ENCODE measurements at regions of chr9 and their contacts with region 1.

Region 1: DNA sequence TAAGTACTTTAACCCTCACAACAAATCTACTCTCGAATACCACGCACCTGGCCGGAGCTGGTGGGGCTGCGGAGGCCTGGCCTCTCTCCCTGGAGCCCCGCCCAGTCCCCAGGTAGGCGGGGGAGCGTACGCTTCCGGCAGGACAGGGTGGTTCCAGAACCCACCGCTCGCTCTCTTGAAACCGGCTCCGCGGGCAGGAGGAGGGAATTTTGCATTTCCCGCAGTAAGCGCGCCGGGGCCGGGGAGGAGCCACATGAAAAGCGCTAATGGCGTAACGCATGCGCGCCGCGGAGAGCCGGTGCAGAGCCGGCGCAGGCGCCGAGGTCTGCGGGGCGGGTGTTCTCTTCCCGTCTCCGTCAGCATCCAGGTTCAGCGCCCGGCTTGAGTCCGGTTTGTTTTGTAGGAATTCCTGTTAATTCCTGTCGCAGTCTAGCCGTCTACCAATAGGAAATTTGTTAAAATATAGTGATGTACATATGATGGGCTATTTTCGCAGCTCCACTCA is 20.8 kb downstream of the CAVIN4 start:
- DNase-seq: peak; percentile 75 to 86
- ATAC-seq: peak; percentile 77 to 89 (median 86)
- H3K4me3 ChIP-seq: peak overlapping the region; percentile 31 to 63 (median 54)
- H3K27ac ChIP-seq: peak overlapping the region in 2 of 10 donors; percentile 7 to 15
- H3K4me1 ChIP-seq: peaks cover 0 to 20% (median 16%) of the 10 kb centered on the region in 9 donors
- H3K27me3 ChIP-seq: peaks cover 0 to 3% (median 0%) of the 10 kb centered on the region in 7 donors
- CTCF ChIP-seq: no peak

Region 2: GRCh38 chr9:99184475-99185347 is 1414.0 kb before region 1 on chr9:
- intact Hi-C with region 1: loop called in 3 of 10 experiments (anchors 10 kb)
- DNase-seq: peak; percentile 81 to 89
- ATAC-seq: peak; percentile 79 to 95 (median 92)
- H3K4me3 ChIP-seq: peak overlapping the region in 8 of 10 donors; percentile 9 to 46 (median 34)
- H3K27ac ChIP-seq: peak overlapping the region in 6 of 10 donors; percentile 0 to 54 (median 43)
- H3K4me1 ChIP-seq: peaks cover 0 to 22% (median 9%) of the 10 kb centered on the region in 9 donors
- H3K27me3 ChIP-seq: no peaks in the 10 kb centered on the region
- CTCF ChIP-seq: peak; percentile 91 to 97 (median 96)

Region 3: GRCh38 chr9:100134731-100135130 is 464.0 kb before region 1 on chr9:
- intact Hi-C with region 1: no loop called
- DNase-seq: no peak
- ATAC-seq: no peak
- H3K4me3 ChIP-seq: no peak overlapping the region
- H3K27ac ChIP-seq: no peak overlapping the region
- H3K4me1 ChIP-seq: no peaks in the 10 kb centered on the region
- H3K27me3 ChIP-seq: no peaks in the 10 kb centered on the region
- CTCF ChIP-seq: no peak

Region 4: GRCh38 chr9:100352727-100353505 is 245.8 kb before region 1 on chr9 and contains the start of gene TEX10:
- intact Hi-C with region 1: loop called in 2 of 10 experiments (anchors 5 to 10 kb)
- DNase-seq: peak; percentile 90
- ATAC-seq: peak; percentile 98 to 99 (median 98)
- H3K4me3 ChIP-seq: peak within 1 kb of the TSS; percentile 77 to 97 (median 84)
- H3K27ac ChIP-seq: peak within 1 kb of the TSS; percentile 42 to 93 (median 80)
- H3K4me1 ChIP-seq: peaks cover 0 to 32% (median 16%) of the 10 kb centered on the region in 9 donors
- H3K27me3 ChIP-seq: no peaks in the 10 kb centered on the region
- CTCF ChIP-seq: no peak
- total RNA-seq, gene TEX10: 7.1 to 10.3 (median 9.2) TPM

Region 5: GRCh38 chr9:100449420-100449819 is 149.3 kb before region 1 on chr9:
- intact Hi-C with region 1: loop called in 3 of 10 experiments (anchors 5 to 10 kb)
- DNase-seq: no peak
- ATAC-seq: no peak
- H3K4me3 ChIP-seq: no peak overlapping the region
- H3K27ac ChIP-seq: no peak overlapping the region
- H3K4me1 ChIP-seq: peaks cover 0 to 22% (median 5%) of the 10 kb centered on the region in 9 donors
- H3K27me3 ChIP-seq: no peaks in the 10 kb centered on the region
- CTCF ChIP-seq: no peak

Region 6: DNA sequence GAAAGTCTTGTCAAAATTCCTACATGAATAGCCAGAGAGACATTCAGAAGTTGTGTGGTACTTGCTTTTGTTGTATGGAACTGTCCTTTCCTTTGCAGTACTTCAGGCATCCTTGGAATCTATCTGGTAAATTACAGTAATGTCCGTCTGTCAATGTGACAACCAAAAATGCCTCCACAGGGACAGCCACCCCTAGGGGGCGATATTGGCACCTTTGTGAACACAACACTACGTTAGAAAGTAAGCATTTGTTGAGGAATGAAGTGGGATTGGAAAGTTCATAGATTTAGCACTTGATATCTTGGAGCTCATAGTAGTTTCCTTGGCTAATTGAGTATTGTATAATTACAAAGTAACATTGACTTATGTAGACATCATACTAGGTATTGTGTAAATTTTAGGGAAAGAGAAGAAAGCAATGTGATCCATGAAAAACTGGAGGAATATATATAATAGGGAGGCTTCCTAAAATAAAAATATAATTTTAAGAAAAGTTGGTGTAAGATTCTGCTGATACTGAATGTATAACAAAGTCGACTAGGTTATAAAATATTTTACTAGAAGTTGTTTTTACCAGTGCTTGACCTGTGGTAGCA is 93.0 kb before region 1 on chr9:
- intact Hi-C with region 1: loop called (anchors 1 to 10 kb)
- DNase-seq: peak; percentile 57 to 58
- ATAC-seq: no peak
- H3K4me3 ChIP-seq: no peak overlapping the region
- H3K27ac ChIP-seq: no peak overlapping the region
- H3K4me1 ChIP-seq: peaks cover 0 to 5% (median 0%) of the 10 kb centered on the region in 9 donors
- H3K27me3 ChIP-seq: no peaks in the 10 kb centered on the region
- CTCF ChIP-seq: peak; percentile 46 to 75 (median 72)

Region 7: GRCh38 chr9:100549048-100549447 is 49.6 kb before region 1 on chr9:
- intact Hi-C with region 1: no loop called
- DNase-seq: no peak
- ATAC-seq: no peak
- H3K4me3 ChIP-seq: no peak overlapping the region
- H3K27ac ChIP-seq: no peak overlapping the region
- H3K4me1 ChIP-seq: no peaks in the 10 kb centered on the region
- H3K27me3 ChIP-seq: no peaks in the 10 kb centered on the region
- CTCF ChIP-seq: no peak

Region 8: DNA sequence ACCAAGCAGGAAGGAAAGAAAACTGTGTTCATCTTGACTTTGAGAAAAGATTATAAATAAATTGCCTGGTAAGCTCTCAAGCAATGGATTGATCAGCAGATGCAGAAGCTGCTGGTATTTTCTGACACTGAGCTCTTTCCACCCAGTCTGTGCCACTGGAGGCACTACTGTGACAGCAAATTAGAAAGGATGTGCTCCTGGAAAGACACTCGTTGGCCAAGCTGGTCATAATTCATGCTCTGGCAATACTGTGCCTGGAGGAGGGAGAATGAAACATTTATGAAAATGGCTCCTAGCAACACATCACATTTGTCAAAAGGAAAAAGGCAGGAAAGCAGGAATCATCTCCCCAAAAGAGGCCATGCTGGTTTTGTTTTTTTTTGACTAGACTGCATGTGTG is 63.4 kb after region 1 on chr9:
- intact Hi-C with region 1: no loop called
- DNase-seq: no peak
- ATAC-seq: no peak
- H3K4me3 ChIP-seq: no peak overlapping the region
- H3K27ac ChIP-seq: no peak overlapping the region
- H3K4me1 ChIP-seq: no peaks in the 10 kb centered on the region
- H3K27me3 ChIP-seq: peaks cover 0 to 8% (median 0%) of the 10 kb centered on the region in 7 donors
- CTCF ChIP-seq: no peak

Region 9: GRCh38 chr9:101311758-101312420 is 713.2 kb after region 1 on chr9:
- intact Hi-C with region 1: loop called in 7 of 10 experiments (anchors 2 to 5 kb)
- DNase-seq: peak in 1 of 2 donors; percentile 47
- ATAC-seq: no peak
- H3K4me3 ChIP-seq: no peak overlapping the region
- H3K27ac ChIP-seq: no peak overlapping the region
- H3K4me1 ChIP-seq: peaks cover 0 to 5% (median 0%) of the 10 kb centered on the region in 9 donors
- H3K27me3 ChIP-seq: peaks cover 0 to 19% (median 6%) of the 10 kb centered on the region in 7 donors
- CTCF ChIP-seq: peak; percentile 53 to 83 (median 74)